GM18951 (cell line): ENCODE measurements at regions of chr12 and their contacts with region 1.

Region 1: DNA sequence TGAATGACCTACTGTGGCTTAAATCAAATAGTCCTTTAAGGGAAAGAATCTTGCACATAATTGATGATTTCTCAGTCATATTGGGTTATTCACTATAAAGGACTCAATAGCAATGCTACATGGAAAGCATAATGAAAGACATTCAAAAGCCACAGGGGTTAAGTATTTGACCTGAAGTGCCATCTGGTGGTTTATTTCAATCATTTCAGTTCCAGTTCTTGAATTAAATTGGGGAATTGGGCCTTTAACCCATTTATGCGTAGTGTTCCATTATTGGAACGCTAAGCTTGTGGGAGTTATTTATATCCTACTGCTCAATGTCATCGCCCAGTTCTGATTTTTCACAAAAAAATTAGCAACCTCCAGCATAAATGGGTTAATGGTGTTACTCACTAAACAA is 41.3 kb upstream of the C12orf71 start:
- POLR2A ChIP-seq: no peak

Region 2: GRCh38 chr12:26689281-26689841 is 434.3 kb before region 1 on chr12:
- in situ Hi-C with region 1: no loop called
- POLR2A ChIP-seq: no peak

Region 3: GRCh38 chr12:27034607-27035293 is 88.9 kb before region 1 on chr12:
- in situ Hi-C with region 1: loop called (anchors 10 kb)
- POLR2A ChIP-seq: no peak

Region 4: GRCh38 chr12:27193854-27194544 is 70.4 kb after region 1 on chr12:
- in situ Hi-C with region 1: no loop called
- POLR2A ChIP-seq: no peak

Region 5: DNA sequence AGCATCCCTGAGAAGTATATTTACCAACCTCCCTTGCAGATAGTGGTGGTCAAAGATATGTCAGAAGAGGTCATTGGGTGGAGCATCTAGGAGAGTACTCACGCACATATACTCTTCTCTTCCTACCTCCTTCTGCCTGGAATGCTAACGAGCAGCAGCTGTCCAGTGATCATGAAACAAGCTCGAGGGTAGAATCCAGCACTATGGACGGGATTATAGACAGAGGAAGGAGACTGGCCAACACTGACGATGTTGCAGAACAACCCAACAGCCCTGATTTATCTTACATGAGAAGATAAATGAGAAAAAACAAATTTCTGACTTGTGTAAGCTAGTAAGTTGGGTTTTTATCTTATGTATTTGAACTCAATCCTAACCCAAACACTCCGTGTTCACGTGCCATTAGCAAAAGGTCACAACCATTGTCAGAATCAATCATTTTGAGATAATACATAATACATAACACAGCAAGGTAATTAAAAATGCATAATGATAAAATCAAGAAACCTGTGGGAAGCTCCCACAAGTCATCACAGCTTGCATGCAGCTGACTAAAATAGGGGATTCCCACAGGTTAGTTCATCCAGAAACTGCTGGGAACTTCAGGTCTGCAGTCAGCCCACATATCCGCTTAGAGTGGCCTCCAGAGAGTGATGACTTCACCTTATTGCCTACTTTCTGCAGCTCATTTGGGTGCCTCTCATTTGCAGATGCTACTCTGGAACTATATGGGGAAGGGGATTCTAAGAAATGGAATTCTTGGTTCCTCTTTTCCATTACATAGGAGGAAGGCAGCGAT is 84.2 kb after region 1 on chr12:
- in situ Hi-C with region 1: no loop called
- POLR2A ChIP-seq: no peak

Region 6: DNA sequence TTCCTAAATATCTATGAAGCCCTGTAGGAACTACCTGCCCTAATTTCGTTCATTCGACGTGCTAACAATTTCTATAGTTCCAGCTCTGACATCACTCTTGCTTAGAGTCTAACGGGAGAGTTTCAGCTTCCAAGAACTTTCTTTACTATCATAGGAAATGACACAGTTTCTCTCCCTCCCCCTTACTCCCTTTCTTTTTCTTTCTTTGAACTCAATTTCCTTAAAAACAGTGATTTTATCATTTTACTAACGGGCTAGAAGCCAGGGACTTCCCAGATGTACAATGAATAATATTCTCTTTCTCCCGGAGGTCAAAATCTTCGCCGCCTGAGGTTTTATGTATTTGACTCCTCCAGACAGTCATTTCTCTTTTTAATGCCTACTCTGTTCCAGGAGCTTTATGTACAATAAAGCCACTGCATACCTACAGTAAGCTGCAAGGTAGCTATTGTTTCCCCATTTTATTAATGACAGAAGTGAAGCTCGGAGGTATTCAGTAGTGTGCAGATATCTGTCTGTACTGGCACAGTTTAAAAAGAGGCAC is 338.6 kb after region 1 on chr12:
- in situ Hi-C with region 1: no loop called
- POLR2A ChIP-seq: no peak

Region 7: DNA sequence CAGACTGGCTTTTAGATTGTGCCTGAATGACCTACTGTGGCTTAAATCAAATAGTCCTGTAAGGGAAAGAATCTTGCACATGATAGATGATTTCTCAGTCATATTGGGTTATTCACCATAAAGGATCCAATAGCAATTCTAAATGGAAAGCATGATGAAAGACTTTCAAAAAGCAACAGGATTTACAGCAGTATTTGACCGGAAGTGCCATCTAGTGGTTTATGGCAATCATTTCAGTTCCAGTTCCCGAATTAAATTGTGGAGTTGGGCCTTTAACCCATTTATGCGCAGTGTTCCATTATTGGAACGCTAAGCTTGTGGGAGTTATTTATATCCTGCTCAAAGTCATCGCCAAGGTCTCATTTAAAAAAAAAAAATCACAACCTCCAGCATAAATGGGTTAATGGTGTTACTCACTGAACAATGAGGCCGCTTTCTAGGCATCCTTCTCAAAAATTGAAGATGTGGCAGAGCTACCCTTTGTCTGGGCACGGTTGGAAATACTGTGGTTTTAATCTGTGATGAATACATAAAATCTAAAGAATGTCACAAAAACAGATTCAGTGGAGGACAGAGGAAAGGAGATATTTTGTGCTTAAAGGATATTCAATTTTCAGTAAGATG is 511.8 kb after region 1 on chr12:
- in situ Hi-C with region 1: loop called (anchors 5 kb)
- POLR2A ChIP-seq: no peak